ENCODE measurements at regions of chr20 and their contacts with region 1.

Region 1: DNA sequence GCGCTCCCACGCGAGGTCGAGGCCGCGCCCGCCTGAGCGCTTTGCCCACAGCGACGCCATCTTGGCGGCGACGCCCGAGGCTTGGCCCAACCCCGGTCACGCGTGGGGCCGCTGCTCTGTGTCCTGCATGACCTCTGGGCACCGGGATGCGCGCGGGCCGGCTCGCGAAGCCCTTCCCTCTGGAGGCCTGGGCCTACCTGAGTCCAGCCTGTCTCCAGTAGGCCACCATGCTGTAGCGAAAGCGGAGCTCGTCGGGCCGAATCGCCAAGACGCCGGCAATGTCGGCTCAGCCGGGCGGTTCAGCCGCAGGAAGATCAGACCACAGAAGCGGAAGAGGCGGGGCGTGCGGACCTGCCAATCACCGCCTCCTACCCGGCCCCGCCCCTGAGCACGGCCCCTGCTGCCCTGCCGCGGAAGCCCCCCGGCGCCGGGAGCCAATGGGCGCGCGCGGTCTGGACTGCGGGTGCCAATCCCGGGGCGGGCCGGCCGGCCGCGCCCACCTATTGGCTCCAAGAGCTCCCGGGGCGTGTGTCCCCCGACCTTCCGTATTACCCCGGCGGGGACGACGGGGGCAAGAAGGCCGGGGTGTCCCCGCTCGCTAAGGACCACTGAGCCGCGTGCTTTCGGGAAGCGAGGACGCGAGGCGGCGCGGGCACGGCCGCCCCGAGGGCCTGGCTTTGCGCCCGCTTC is at the start of gene ATP5F1E:
- DNase-seq: peak; percentile 98
- ATAC-seq: peak; percentile 97
- H3K4me3 ChIP-seq: peak within 1 kb of the TSS; percentile 68 to 82 (median 80)
- H3K4me3 Mint-ChIP-seq: peak within 1 kb of the TSS; percentile 97
- H3K27ac ChIP-seq: peak within 1 kb of the TSS; percentile 84 to 91
- H3K27ac Mint-ChIP-seq: peak within 1 kb of the TSS; percentile 98
- H3K4me1 ChIP-seq: peaks cover 27 to 37% of the 10 kb centered on the region in 2 donors
- H3K4me1 Mint-ChIP-seq: peaks cover 45% of the 10 kb centered on the region
- H3K27me3 ChIP-seq: no peaks in the 10 kb centered on the region
- H3K27me3 Mint-ChIP-seq: no peaks in the 10 kb centered on the region
- CTCF ChIP-seq: no peak
- total RNA-seq, gene ATP5F1E: 51.0 and 55.0 TPM in 2 replicates

Region 2: DNA sequence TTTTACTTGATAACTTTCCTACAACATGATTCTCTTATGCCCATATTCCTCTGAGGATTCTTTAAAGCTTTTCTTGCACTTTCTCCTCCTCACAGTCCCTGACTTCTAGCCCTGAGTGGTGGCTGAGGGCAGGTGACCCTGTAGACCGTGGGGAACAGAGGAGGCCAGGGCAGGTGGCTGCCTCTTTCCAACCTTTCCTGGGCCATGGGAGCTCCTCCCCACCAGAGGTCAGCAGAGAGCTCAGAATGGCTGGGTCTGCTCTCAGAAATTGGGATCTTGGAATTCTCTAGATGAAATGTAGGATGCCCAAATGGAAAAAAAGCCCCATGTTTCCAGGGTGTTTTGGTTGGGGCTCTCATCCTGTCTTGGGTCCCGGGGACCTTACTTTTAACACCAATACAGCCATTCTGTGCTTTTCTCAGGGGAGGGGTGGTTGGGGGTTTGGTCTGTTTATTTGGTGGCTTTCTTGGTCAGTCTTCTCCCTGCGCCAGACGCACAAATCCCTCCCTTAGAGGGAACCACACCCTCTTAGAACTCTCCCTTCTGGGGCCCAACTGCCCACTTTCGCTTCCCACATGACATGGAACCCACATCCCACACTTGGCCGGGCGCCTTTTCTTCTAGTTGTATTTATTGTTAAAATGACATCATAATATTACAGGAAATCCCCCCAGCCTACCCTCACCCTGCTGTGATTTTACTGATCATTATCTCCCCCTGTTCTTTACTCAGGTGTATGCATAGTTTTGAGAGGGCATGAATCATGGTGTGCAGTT is 161.7 kb before region 1 on chr20:
- CTCF ChIA-PET with region 1: interaction called, 10 read pairs
- POLR2A ChIA-PET with region 1: no interaction called
- intact Hi-C with region 1: no loop called
- DNase-seq: peak; percentile 69
- ATAC-seq: peak; percentile 78
- H3K4me3 ChIP-seq: no peak overlapping the region
- H3K4me3 Mint-ChIP-seq: no peak overlapping the region
- H3K27ac ChIP-seq: no peak overlapping the region
- H3K27ac Mint-ChIP-seq: no peak overlapping the region
- H3K4me1 ChIP-seq: peaks cover 5 to 9% of the 10 kb centered on the region in 2 donors
- H3K4me1 Mint-ChIP-seq: peaks cover 12% of the 10 kb centered on the region
- H3K27me3 ChIP-seq: peaks cover 0 to 4% (median 1%) of the 10 kb centered on the region in 4 experiments
- H3K27me3 Mint-ChIP-seq: peaks cover 8% of the 10 kb centered on the region
- CTCF ChIP-seq: peak; percentile 78

Region 3: DNA sequence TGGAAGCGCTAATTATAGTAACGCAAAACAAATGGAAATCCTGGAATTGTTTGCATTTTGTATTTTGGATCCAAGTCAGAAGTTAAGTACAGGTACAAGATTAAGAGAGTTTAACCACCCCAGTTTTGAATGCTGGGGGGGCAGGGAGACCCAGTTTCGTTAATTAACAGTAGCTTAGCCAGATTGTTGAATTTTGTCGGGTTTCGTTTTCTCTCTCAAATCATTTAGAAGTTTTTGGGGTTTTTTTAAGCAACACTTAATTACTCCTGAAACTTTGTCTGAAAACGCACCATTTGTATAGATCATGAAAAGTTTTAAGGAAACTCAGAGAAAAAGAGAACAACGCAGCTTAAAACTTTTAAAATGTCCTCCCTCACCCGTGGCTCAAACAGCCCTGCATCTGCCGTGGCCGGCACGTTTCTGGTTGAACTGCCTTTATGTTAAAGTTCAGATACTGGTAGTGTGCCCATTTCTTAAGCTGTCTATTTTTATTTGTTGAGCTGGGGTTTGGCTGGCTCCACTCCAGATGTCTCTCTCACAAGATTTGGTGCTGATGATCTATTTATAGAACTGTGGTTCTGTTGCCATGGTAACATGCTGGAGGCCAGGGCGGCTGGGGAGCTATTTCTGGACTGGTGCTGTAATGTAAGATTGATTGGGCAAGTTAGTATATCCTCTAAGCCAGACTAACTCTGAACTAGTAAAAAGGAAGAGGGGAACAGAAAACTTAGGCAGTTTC is 124.6 kb before region 1 on chr20:
- CTCF ChIA-PET with region 1: interaction called, 6 read pairs
- POLR2A ChIA-PET with region 1: interaction called, 3 read pairs
- intact Hi-C with region 1: loop called (anchors 1 kb)
- DNase-seq: peak; percentile 95
- ATAC-seq: peak; percentile 84
- H3K4me3 ChIP-seq: peak overlapping the region; percentile 24 to 54 (median 33)
- H3K4me3 Mint-ChIP-seq: peak overlapping the region; percentile 85
- H3K27ac ChIP-seq: peak overlapping the region; percentile 94 to 97
- H3K27ac Mint-ChIP-seq: peak overlapping the region; percentile 94
- H3K4me1 ChIP-seq: peaks cover 24 to 37% of the 10 kb centered on the region in 2 donors
- H3K4me1 Mint-ChIP-seq: peaks cover 59% of the 10 kb centered on the region
- H3K27me3 ChIP-seq: no peaks in the 10 kb centered on the region
- H3K27me3 Mint-ChIP-seq: no peaks in the 10 kb centered on the region
- CTCF ChIP-seq: no peak

Region 4: DNA sequence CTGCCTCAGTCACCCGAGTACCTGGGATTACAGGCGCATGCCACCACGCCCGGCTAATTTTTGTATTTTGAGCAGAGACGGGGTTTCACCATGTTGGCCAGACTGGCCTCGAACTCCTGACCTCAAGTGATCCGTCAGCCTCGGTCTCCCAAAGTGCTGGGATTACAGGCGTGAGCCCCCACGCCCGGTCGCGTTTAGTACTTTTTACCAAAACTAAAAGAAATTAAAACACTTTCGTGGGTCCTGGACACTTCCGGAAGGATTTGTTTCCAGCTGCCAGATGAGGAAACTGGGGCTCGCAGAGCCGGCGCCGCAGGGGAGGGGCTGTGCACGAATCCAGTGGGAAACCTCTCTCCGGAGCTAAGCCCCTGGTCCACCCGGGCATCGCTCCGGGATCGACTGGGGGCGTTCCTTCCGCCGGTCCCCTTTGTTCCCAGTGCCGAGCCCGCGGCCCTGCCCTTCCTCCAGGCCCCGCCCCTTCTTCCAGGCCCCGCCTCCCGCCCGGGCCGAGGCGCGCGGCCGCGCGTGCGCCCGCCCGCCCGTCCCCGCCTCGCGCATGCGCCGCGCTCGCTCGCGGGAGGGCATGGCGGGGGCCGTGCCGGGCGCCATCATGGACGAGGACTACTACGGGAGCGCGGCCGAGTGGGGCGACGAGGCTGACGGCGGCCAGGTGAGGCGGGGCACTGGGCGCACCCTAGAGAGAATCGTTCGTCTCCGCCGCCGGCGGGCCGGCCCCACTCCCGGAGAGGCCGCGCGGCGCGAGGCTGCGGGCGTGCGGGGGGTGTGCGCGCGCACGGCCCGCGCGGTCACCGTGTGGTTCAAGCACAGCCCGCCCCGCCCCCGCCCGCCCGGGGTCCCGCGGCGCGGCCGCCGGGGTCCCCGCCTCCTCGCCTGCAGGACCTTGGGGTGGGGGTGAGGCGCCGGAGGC is 51.2 kb before region 1 on chr20 and contains the start of gene NELFCD:
- CTCF ChIA-PET with region 1: interaction called, 4 read pairs
- POLR2A ChIA-PET with region 1: interaction called, 5 read pairs
- intact Hi-C with region 1: loop called (anchors 1 kb)
- DNase-seq: peak; percentile 93
- ATAC-seq: peak; percentile 93
- H3K4me3 ChIP-seq: peak within 1 kb of the TSS; percentile 79 to 91 (median 80)
- H3K4me3 Mint-ChIP-seq: peak within 1 kb of the TSS; percentile 96
- H3K27ac ChIP-seq: peak within 1 kb of the TSS; percentile 71 to 76
- H3K27ac Mint-ChIP-seq: peak within 1 kb of the TSS; percentile 94
- H3K4me1 ChIP-seq: peaks cover 24 to 47% of the 10 kb centered on the region in 2 donors
- H3K4me1 Mint-ChIP-seq: peaks cover 43% of the 10 kb centered on the region
- H3K27me3 ChIP-seq: no peaks in the 10 kb centered on the region
- H3K27me3 Mint-ChIP-seq: no peaks in the 10 kb centered on the region
- CTCF ChIP-seq: no peak
- total RNA-seq, gene NELFCD: 107 and 108 TPM in 2 replicates

Region 5: DNA sequence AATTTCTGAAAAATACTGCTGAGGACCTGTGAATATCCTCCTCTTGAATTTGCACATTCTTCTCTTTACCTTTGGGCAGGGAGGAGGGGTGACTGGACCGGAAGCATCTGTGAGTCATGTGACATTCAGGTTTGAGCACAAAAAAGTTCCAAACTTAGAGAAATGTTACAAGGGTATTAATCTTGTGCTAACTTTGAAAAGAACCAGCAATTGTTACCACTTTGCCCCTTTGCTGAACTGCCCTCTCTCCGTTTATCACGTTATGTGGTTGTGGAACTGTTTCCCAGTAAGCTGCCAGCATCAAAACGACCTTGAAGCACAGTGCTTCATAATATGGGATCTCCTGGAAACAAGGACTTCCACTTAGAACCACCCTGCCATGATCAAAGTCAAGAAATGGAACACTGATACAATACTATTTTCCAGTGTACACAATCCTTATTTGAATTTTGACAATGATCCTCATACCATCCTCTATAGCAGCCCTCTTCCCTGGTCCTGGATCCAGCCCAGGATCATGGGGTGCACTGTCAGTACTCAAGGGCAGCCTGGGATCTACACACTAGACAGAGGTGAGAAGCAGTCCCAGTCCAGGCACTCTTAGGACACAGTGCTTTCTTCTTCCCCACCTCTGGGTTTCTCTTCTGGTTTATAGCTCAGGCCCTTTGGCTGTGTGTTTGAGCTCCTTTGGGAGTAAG is 15.2 kb before region 1 on chr20:
- CTCF ChIA-PET with region 1: interaction called, 3 read pairs
- POLR2A ChIA-PET with region 1: interaction called, 10 read pairs
- intact Hi-C with region 1: loop called (anchors 2 kb)
- DNase-seq: peak; percentile 61
- ATAC-seq: peak; percentile 67
- H3K4me3 ChIP-seq: peak overlapping the region in 1 of 5 experiments; percentile 2
- H3K4me3 Mint-ChIP-seq: peak overlapping the region; percentile 76
- H3K27ac ChIP-seq: peak overlapping the region; percentile 14 to 35
- H3K27ac Mint-ChIP-seq: peak overlapping the region; percentile 86
- H3K4me1 ChIP-seq: peaks cover 20 to 24% of the 10 kb centered on the region in 2 donors
- H3K4me1 Mint-ChIP-seq: peaks cover 37% of the 10 kb centered on the region
- H3K27me3 ChIP-seq: no peaks in the 10 kb centered on the region
- H3K27me3 Mint-ChIP-seq: no peaks in the 10 kb centered on the region
- CTCF ChIP-seq: no peak

Region 6: GRCh38 chr20:59042796-59043660 is 10.9 kb after region 1 on chr20:
- CTCF ChIA-PET with region 1: interaction called, 10 read pairs
- POLR2A ChIA-PET with region 1: interaction called, 28 read pairs
- intact Hi-C with region 1: loop called (anchors 1 kb)
- DNase-seq: peak; percentile 96
- ATAC-seq: peak; percentile 98
- H3K4me3 ChIP-seq: peak overlapping the region in 4 of 5 experiments; percentile 80 to 97 (median 86)
- H3K4me3 Mint-ChIP-seq: peak overlapping the region; percentile 94
- H3K27ac ChIP-seq: peak overlapping the region; percentile 69 to 89
- H3K27ac Mint-ChIP-seq: peak overlapping the region; percentile 93
- H3K4me1 ChIP-seq: peaks cover 45 to 47% of the 10 kb centered on the region in 2 donors
- H3K4me1 Mint-ChIP-seq: peaks cover 51% of the 10 kb centered on the region
- H3K27me3 ChIP-seq: no peaks in the 10 kb centered on the region
- H3K27me3 Mint-ChIP-seq: no peaks in the 10 kb centered on the region
- CTCF ChIP-seq: no peak

Region 7: DNA sequence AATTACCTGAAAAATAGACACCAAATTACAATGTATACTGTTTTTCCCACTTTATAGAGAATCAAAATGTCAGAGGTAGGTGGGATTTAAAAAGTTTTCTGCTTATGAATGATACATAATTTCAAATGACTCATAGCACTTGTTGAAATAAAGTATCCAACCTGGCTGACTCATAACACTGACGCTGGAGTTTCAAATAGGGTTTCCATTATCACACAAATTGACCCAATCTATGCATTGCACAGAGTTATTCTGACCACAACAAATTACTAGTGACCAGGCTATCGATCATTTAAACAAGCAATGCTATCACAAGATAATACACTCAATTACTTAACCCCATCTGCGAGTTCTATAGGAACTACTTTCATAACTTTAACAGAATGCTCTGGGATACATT is 42.3 kb after region 1 on chr20:
- CTCF ChIA-PET with region 1: no interaction called
- POLR2A ChIA-PET with region 1: no interaction called
- intact Hi-C with region 1: no loop called
- DNase-seq: no peak
- ATAC-seq: no peak
- H3K4me3 ChIP-seq: no peak overlapping the region
- H3K4me3 Mint-ChIP-seq: no peak overlapping the region
- H3K27ac ChIP-seq: no peak overlapping the region
- H3K27ac Mint-ChIP-seq: no peak overlapping the region
- H3K4me1 ChIP-seq: peaks cover 13 to 16% of the 10 kb centered on the region in 2 donors
- H3K4me1 Mint-ChIP-seq: peaks cover 21% of the 10 kb centered on the region
- H3K27me3 ChIP-seq: peaks cover 0 to 9% (median 1%) of the 10 kb centered on the region in 4 experiments
- H3K27me3 Mint-ChIP-seq: peaks cover 23% of the 10 kb centered on the region
- CTCF ChIP-seq: no peak

Region 8: GRCh38 chr20:59101961-59102360 is 69.8 kb after region 1 on chr20:
- CTCF ChIA-PET with region 1: no interaction called
- POLR2A ChIA-PET with region 1: no interaction called
- intact Hi-C with region 1: no loop called
- DNase-seq: no peak
- ATAC-seq: no peak
- H3K4me3 ChIP-seq: no peak overlapping the region
- H3K4me3 Mint-ChIP-seq: no peak overlapping the region
- H3K27ac ChIP-seq: no peak overlapping the region
- H3K27ac Mint-ChIP-seq: no peak overlapping the region
- H3K4me1 ChIP-seq: peaks cover 3 to 7% of the 10 kb centered on the region in 2 donors
- H3K4me1 Mint-ChIP-seq: peaks cover 10% of the 10 kb centered on the region
- H3K27me3 ChIP-seq: no peaks in the 10 kb centered on the region
- H3K27me3 Mint-ChIP-seq: peaks cover 8% of the 10 kb centered on the region
- CTCF ChIP-seq: no peak

Measured in B cell (primary cell).